ENCODE measurements at regions of chr7 and their contacts with region 1.

Region 1: DNA sequence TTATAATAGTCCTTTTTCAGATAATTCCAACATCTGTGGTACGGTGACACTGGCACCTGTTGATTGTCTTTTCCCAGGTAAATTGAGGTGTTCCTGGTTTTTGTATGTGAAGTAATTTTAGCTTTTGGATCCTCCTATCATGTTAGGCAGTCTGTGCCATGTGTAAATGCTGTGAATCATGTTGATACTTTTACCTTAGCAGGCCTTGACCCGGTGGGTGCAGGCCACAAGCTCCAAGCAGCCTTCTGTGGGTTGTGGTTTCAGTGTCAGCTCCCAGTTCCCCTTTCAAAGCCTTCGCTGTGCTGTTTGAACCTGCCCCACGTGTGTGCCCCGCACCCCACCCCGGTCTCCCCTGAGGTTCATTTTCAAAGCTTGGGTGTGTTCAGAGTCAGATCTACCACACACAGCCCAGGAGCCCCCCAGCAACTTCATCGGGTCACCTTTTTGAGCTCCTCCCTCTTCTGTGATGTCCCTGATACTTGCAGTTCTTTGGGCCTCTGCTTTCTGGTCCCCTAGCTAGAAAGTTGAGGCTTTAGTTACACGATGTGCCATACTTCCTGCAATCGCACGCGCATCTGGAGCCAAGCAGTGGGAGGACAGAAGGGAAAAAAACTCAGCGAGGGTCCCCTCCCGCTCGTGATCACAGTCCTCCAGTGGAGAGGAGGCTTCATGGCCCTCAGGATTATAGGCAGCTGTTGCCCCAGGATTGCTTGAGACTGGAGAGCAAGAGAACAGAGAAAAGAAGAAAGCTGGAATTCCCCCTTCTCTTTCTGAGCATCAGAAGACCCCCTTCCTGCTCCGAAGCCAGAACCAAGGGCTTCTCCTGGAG is 8.7 kb upstream of the BHLHA15 start:
- DNase-seq: peak; percentile 91
- H3K4me3 Mint-ChIP-seq: peak overlapping the region; percentile 77
- H3K27ac Mint-ChIP-seq: peak overlapping the region; percentile 83
- H3K4me1 Mint-ChIP-seq: peaks cover 37% of the 10 kb centered on the region
- H3K27me3 Mint-ChIP-seq: no peaks in the 10 kb centered on the region

Region 2: GRCh38 chr7:97623333-97623732 is 579.2 kb before region 1 on chr7:
- intact Hi-C with region 1: no loop called
- DNase-seq: no peak
- H3K4me3 Mint-ChIP-seq: no peak overlapping the region
- H3K27ac Mint-ChIP-seq: no peak overlapping the region
- H3K4me1 Mint-ChIP-seq: no peaks in the 10 kb centered on the region
- H3K27me3 Mint-ChIP-seq: no peaks in the 10 kb centered on the region

Region 3: GRCh38 chr7:98133181-98133580 is 69.4 kb before region 1 on chr7:
- intact Hi-C with region 1: loop called (anchors 1 kb)
- DNase-seq: peak; percentile 75
- H3K4me3 Mint-ChIP-seq: peak overlapping the region; percentile 58
- H3K27ac Mint-ChIP-seq: peak overlapping the region; percentile 18
- H3K4me1 Mint-ChIP-seq: peaks cover 36% of the 10 kb centered on the region
- H3K27me3 Mint-ChIP-seq: peaks cover 13% of the 10 kb centered on the region

Region 4: GRCh38 chr7:98217623-98218582 is 15.3 kb after region 1 on chr7:
- intact Hi-C with region 1: no loop called
- DNase-seq: no peak
- H3K4me3 Mint-ChIP-seq: no peak overlapping the region
- H3K27ac Mint-ChIP-seq: no peak overlapping the region
- H3K4me1 Mint-ChIP-seq: peaks cover 8% of the 10 kb centered on the region
- H3K27me3 Mint-ChIP-seq: no peaks in the 10 kb centered on the region

Region 5: DNA sequence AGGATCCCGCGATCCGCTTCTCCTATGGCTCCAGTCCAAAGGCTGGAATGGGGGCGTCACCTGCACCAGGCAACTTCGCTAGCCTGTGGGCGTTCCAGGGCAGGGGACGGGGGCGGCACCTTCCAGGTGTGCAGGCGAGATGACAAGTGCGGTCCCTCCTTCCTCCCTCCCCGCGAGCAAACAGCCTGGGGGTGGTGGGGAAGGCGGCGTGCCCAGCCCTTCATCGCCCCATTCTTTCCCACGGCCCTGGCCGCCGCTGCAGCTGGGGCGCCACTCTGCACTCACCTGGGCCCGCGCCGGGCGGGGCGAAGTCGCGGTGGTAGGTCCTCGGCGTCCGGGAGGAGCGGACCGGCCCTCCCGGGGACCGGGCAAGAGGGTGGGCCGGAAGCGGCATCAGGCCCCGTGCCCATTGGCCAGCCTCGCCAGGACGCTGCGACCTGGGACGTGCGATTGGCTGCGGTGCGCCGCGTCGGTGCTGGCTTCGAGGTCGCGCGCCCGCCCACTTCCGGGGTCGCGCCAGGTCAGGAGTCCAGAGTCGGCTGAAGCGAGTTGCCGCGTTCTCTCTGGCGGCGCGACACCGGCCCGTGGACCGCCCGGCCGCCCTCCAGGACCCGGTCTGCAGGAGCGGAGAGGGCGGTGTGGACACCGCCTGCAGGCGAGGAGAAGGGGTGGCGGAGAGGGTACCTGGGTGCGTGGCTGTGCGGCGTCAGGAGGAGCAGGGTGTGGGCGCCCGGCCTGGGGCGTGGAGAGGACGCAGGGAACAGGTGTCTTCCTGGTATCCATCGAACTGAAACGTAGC is 49.5 kb after region 1 on chr7 and contains the start of gene TECPR1:
- intact Hi-C with region 1: loop called (anchors 5 kb)
- DNase-seq: peak; percentile 98
- H3K4me3 Mint-ChIP-seq: peak within 1 kb of the TSS; percentile 98
- H3K27ac Mint-ChIP-seq: peak within 1 kb of the TSS; percentile 98
- H3K4me1 Mint-ChIP-seq: peaks cover 52% of the 10 kb centered on the region
- H3K27me3 Mint-ChIP-seq: no peaks in the 10 kb centered on the region
- total RNA-seq, gene TECPR1: 43.1 and 47.8 TPM in 2 replicates